ENCODE measurements at regions of chr10 and their contacts with region 1.

Region 1: GRCh38 chr10:112375721-112376395 is 1.9 kb downstream of the ACSL5 start:
- DNase-seq: peak; percentile 54
- H3K4me3 Mint-ChIP-seq: peak overlapping the region; percentile 100
- H3K27ac Mint-ChIP-seq: peak overlapping the region; percentile 100
- H3K4me1 Mint-ChIP-seq: peaks cover 53% of the 10 kb centered on the region
- H3K27me3 Mint-ChIP-seq: no peaks in the 10 kb centered on the region

Region 2: DNA sequence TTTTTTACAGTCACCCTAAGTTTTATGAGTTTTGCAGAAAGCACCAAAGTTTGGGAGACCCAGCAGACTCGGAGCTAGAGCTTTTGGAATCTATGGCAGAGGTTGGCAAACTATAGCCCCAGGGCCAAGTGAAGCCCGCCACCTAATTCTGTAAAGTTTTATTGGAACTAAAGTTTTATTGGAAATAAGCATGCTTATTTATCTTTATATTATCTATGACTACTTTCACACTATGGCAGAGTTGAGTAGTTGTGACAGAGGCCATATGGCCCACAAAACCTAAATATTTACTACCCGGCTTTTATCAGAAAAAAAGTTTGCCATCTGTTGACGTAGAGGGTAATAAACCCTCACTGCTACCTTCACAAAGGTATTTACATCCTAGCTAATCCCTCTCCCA is 459.8 kb before region 1 on chr10:
- intact Hi-C with region 1: no loop called
- DNase-seq: no peak
- H3K4me3 Mint-ChIP-seq: no peak overlapping the region
- H3K27ac Mint-ChIP-seq: no peak overlapping the region
- H3K4me1 Mint-ChIP-seq: no peaks in the 10 kb centered on the region
- H3K27me3 Mint-ChIP-seq: no peaks in the 10 kb centered on the region

Region 3: DNA sequence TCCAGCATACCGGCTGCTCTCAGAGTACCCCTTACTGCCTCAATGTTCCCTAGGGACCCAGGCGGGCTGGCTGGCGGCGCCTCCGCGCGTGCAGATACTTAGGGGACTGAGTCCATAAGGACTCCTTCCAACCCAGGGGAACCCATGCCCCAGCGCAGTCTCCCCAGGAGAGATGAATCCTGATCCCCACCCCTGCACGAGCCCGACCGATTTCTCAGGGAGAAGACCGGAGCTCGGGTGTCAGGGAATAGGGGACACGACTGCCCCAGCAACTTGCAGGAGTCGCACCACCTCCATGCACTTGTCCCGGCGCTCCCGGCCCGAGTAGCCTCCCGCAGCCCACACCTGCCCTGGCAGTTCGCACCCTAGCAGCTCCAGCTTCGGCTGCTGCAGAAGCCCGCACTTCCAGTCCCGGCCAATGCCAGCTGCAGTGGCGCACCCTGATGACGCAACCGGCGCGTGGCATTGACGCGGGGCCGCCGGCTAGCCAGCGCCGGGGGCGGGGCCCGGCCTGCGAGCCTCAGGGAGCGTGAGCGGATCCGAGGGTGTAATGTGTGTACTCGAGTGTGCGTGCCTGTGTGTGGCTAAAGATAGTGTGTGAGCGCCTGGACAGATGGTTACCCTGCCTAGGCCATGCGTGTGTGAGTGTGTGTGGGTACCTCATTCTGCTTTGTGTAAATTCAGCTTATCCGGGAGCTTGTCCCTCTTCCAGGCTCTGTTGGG is 192.4 kb before region 1 on chr10 and contains the start of gene GPAM:
- intact Hi-C with region 1: loop called (anchors 5 kb)
- DNase-seq: peak; percentile 98
- H3K4me3 Mint-ChIP-seq: peak within 1 kb of the TSS; percentile 86
- H3K27ac Mint-ChIP-seq: peak within 1 kb of the TSS; percentile 93
- H3K4me1 Mint-ChIP-seq: peaks cover 34% of the 10 kb centered on the region
- H3K27me3 Mint-ChIP-seq: peaks cover 4% of the 10 kb centered on the region
- total RNA-seq, gene GPAM: 10.2 and 10.5 TPM in 2 replicates

Region 4: GRCh38 chr10:112389147-112389822 is 13.4 kb after region 1 on chr10:
- intact Hi-C with region 1: loop called (anchors 1 kb)
- DNase-seq: peak; percentile 55
- H3K4me3 Mint-ChIP-seq: peak overlapping the region; percentile 57
- H3K27ac Mint-ChIP-seq: peak overlapping the region; percentile 88
- H3K4me1 Mint-ChIP-seq: peaks cover 67% of the 10 kb centered on the region
- H3K27me3 Mint-ChIP-seq: no peaks in the 10 kb centered on the region

Region 5: DNA sequence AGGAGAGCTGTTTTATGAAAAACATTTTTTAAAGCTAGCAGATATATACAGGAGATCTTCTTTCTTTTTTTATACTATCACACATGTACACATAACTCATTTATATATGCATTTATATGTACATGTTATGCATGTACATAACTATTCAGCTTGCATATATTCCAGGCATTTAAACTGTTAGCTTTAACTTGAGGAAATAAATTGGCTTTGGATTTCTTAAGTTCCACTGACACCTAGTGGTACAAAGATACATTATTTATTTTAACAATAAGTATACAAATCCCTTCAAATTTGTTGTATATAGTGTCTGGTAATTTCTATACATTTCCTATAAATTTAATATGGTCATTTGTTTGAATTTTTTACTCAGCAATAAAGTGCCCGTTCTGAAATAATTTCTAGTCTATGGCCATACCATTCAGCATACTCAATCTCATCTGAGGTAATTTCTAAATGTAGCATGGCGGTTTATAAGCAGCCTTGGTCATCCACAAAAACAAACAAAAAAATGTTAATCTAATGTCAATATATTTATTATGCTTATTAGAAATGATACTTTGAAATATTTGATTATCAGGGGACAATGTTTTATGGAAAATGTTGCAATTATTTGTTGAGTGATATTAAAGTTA is 59.2 kb after region 1 on chr10:
- intact Hi-C with region 1: loop called (anchors 2 kb)
- DNase-seq: no peak
- H3K4me3 Mint-ChIP-seq: no peak overlapping the region
- H3K27ac Mint-ChIP-seq: no peak overlapping the region
- H3K4me1 Mint-ChIP-seq: peaks cover 5% of the 10 kb centered on the region
- H3K27me3 Mint-ChIP-seq: no peaks in the 10 kb centered on the region

Region 6: GRCh38 chr10:112446855-112447711 is 71.2 kb after region 1 on chr10 and contains the starts of genes VTI1A and ZDHHC6:
- intact Hi-C with region 1: loop called (anchors 1 kb)
- DNase-seq: peak; percentile 80
- H3K4me3 Mint-ChIP-seq: peak within 1 kb of the TSS; percentile 93
- H3K27ac Mint-ChIP-seq: peak within 1 kb of the TSS; percentile 93
- H3K4me1 Mint-ChIP-seq: peaks cover 47% of the 10 kb centered on the region
- H3K27me3 Mint-ChIP-seq: no peaks in the 10 kb centered on the region
- total RNA-seq, gene VTI1A: 39.4 and 39.9 TPM in 2 replicates
- total RNA-seq, gene ZDHHC6: 51.9 and 52.6 TPM in 2 replicates